ENCODE measurements at regions of chr20 and their contacts with region 1.

Region 1: GRCh38 chr20:48523212-48523941 is 304.4 kb downstream of the PREX1 start:
- DNase-seq: no peak
- ATAC-seq: peak; percentile 66

Region 2: DNA sequence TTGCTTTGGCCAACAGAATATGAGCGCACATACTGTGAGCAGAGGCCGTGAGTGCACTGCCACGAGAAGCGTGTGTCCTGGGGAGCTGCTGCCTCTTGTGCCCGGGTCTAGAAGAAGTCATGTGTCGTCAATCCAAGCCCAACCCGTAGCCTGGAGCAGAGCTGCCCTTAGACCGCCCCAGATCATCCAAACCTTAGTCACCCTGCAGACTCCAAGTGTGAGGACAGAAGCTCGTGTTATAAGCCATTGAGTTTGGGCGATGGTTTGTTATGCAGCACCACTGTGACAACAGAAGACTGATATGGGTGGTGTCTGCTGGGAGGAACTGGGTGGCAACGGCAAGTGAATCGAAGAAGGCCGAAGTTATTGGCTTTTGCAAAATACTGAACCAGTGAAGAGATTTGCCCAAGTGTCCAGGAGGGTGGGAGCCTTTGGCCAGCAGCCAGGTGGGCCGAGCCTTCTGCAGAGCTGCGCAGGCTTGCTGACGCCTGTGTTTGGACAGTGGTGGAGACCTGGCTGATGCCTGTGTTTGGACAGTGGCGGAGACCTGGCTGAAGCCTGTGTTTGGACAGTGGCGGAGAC is 636.8 kb before region 1 on chr20:
- intact Hi-C with region 1: loop called (anchors 10 kb)
- DNase-seq: peak in 1 of 2 donors; percentile 9
- ATAC-seq: no peak

Measured in left colon (tissue), 2 donors.